Vagina (tissue), 2 donors: ENCODE measurements at regions of chr16 and their contacts with region 1.

Region 1: DNA sequence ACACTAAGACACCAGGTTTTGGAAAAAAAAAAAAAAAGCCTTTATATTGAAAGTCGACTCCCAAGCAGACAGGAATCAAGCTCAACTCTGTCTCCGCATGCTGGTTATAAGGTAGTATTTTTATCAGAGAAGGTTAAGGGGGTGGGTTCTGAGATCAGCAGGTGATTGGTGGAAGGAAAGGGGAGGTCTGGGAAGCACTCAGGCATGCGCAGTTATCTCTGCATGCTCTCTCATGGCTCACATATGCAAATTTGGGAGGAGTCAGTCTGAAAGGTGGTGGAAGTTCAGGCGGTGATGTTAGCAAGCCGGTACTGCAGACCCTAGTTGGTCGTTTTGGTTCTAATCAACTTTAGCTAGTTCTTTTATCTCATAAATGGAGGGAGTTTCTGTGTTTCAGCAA is 357.6 kb upstream of the C16orf82 start:
- DNase-seq: no peak
- H3K4me3 ChIP-seq: no peak overlapping the region
- H3K27ac ChIP-seq: no peak overlapping the region
- H3K4me1 ChIP-seq: no peaks in the 10 kb centered on the region
- H3K27me3 ChIP-seq: no peaks in the 10 kb centered on the region
- CTCF ChIP-seq: no peak
- POLR2A ChIP-seq: no peak

Region 2: DNA sequence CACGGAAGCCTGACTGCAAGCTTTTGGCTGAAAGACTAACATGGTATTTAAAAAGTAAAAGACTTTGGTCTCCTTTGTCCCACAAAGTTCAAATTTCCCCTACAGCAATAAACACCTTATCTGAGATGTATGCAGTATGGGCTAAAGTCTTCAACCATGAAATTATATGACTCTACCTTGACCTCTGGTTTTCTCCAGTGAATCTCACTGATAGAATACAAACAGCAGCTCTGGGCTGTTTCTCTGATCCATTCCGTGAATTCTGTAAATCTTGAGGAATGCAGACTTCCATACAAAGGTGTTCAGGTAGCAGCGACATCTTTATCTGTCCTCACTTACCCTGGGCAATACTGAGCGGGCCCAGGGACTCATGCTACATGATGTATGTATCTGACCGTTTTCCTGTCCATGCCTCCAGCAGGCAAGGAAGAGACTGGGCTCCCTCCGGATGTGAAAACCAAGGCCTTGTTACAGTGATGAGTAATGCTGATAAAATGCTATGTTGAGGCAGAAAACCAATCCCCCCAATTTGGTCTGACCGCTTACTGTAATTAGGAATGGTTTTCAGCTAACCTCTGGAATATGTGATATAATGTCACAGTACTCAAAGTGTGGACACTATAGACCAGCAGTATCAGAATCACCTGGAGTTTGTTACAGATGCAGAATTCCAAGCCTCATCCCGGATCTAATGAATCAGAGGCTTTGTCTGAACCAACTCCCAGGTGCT is 427.6 kb before region 1 on chr16:
- intact Hi-C with region 1: loop called (anchors 10 kb)
- DNase-seq: no peak
- H3K4me3 ChIP-seq: no peak overlapping the region
- H3K27ac ChIP-seq: no peak overlapping the region
- H3K4me1 ChIP-seq: no peaks in the 10 kb centered on the region
- H3K27me3 ChIP-seq: no peaks in the 10 kb centered on the region
- CTCF ChIP-seq: no peak
- POLR2A ChIP-seq: no peak

Region 3: GRCh38 chr16:26583803-26584202 is 125.4 kb before region 1 on chr16:
- intact Hi-C with region 1: no loop called
- DNase-seq: no peak
- H3K4me3 ChIP-seq: no peak overlapping the region
- H3K27ac ChIP-seq: no peak overlapping the region
- H3K4me1 ChIP-seq: no peaks in the 10 kb centered on the region
- H3K27me3 ChIP-seq: no peaks in the 10 kb centered on the region
- CTCF ChIP-seq: no peak
- POLR2A ChIP-seq: no peak